Activated B cell treated with CpG ODN at 0.5 μM for 24 hours (primary cell): ENCODE measurements at regions of chr19 and their contacts with region 1.

Region 1: GRCh38 chr19:19627621-19628500 is at the start of gene LPAR2:
- DNase-seq: peak; percentile 81
- ATAC-seq: peak; percentile 87
- H3K4me3 Mint-ChIP-seq: peak within 1 kb of the TSS; percentile 93
- H3K27ac Mint-ChIP-seq: peak within 1 kb of the TSS; percentile 92
- H3K4me1 Mint-ChIP-seq: peaks cover 24% of the 10 kb centered on the region
- H3K27me3 Mint-ChIP-seq: no peaks in the 10 kb centered on the region
- CTCF ChIP-seq: no peak
- total RNA-seq, gene LPAR2: 29.0 and 33.7 TPM in 2 replicates

Region 2: GRCh38 chr19:19568802-19569756 is 58.8 kb before region 1 on chr19:
- CTCF ChIA-PET with region 1: no interaction called
- POLR2A ChIA-PET with region 1: no interaction called
- intact Hi-C with region 1: no loop called
- DNase-seq: no peak
- ATAC-seq: no peak
- H3K4me3 Mint-ChIP-seq: no peak overlapping the region
- H3K27ac Mint-ChIP-seq: no peak overlapping the region
- H3K4me1 Mint-ChIP-seq: no peaks in the 10 kb centered on the region
- H3K27me3 Mint-ChIP-seq: no peaks in the 10 kb centered on the region
- CTCF ChIP-seq: no peak

Region 3: GRCh38 chr19:19597809-19598306 is 30.0 kb before region 1 on chr19:
- CTCF ChIA-PET with region 1: no interaction called
- POLR2A ChIA-PET with region 1: interaction called, 11 read pairs
- intact Hi-C with region 1: no loop called
- DNase-seq: no peak
- ATAC-seq: peak; percentile 80
- H3K4me3 Mint-ChIP-seq: peak overlapping the region; percentile 62
- H3K27ac Mint-ChIP-seq: peak overlapping the region; percentile 89
- H3K4me1 Mint-ChIP-seq: peaks cover 67% of the 10 kb centered on the region
- H3K27me3 Mint-ChIP-seq: no peaks in the 10 kb centered on the region
- CTCF ChIP-seq: no peak

Region 4: DNA sequence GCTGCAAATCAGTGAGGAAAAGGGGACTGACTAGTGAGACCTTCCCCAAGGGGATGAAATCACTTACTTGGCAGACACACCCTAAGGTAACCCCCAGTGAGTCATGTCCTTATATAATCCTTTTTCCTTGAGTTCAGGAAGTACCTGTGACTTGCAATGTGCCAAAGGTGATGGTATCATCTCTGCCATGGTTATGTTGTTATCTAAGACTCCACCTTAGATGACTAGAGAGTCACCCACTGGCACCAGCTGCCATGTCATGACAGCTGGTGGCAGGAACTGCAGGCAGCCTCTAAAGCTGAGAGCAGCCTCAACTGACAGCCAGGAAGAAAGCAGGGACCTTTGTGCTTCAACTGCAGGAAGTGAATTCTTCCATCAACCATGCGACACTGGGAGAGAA is 21.8 kb before region 1 on chr19:
- CTCF ChIA-PET with region 1: no interaction called
- POLR2A ChIA-PET with region 1: interaction called, 10 read pairs
- intact Hi-C with region 1: no loop called
- DNase-seq: no peak
- ATAC-seq: peak; percentile 53
- H3K4me3 Mint-ChIP-seq: no peak overlapping the region
- H3K27ac Mint-ChIP-seq: peak overlapping the region; percentile 62
- H3K4me1 Mint-ChIP-seq: peaks cover 33% of the 10 kb centered on the region
- H3K27me3 Mint-ChIP-seq: no peaks in the 10 kb centered on the region
- CTCF ChIP-seq: no peak